ENCODE measurements at regions of chr19 and their contacts with region 1.

Region 1: GRCh38 chr19:32405431-32406161 is at the start of gene DPY19L3:
- DNase-seq: peak; percentile 95
- ATAC-seq: peak; percentile 97
- H3K4me3 Mint-ChIP-seq: peak within 1 kb of the TSS; percentile 84
- H3K27ac Mint-ChIP-seq: peak within 1 kb of the TSS; percentile 91
- H3K4me1 Mint-ChIP-seq: peaks cover 20% of the 10 kb centered on the region
- H3K27me3 Mint-ChIP-seq: no peaks in the 10 kb centered on the region
- total RNA-seq, gene DPY19L3: 14.3 to 14.6 TPM

Region 2: DNA sequence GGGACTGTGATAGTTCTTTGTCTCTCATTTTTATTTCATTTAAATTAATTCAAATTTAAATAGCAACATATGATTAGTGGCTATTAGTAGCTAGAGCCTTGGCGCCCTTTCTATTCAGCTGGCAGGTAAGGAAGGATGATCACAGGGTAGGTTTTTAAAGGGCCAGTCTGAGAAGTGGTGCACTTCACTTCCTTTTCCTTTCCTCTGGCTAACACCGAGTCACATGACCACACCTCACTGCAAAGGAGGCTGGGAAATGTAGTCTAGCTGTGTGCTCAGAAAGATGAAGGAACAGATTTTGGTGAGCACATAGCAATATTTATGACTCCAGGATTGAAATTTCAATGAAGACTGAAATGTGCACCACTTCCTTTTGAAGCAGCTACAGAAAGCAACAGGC is 1185.1 kb before region 1 on chr19:
- CTCF ChIA-PET with region 1: no interaction called
- POLR2A ChIA-PET with region 1: no interaction called
- intact Hi-C with region 1: loop called (anchors 5 to 10 kb)
- DNase-seq: peak; percentile 51
- ATAC-seq: peak; percentile 96
- H3K4me3 Mint-ChIP-seq: no peak overlapping the region
- H3K27ac Mint-ChIP-seq: peak overlapping the region; percentile 45
- H3K4me1 Mint-ChIP-seq: peaks cover 14% of the 10 kb centered on the region
- H3K27me3 Mint-ChIP-seq: no peaks in the 10 kb centered on the region

Region 3: GRCh38 chr19:32580901-32581703 is 175.5 kb after region 1 on chr19 and contains the start of gene PDCD5:
- CTCF ChIA-PET with region 1: no interaction called
- POLR2A ChIA-PET with region 1: no interaction called
- intact Hi-C with region 1: loop called (anchors 1 to 2 kb)
- DNase-seq: peak; percentile 99
- ATAC-seq: peak; percentile 90
- H3K4me3 Mint-ChIP-seq: peak within 1 kb of the TSS; percentile 92
- H3K27ac Mint-ChIP-seq: peak within 1 kb of the TSS; percentile 91
- H3K4me1 Mint-ChIP-seq: peaks cover 33% of the 10 kb centered on the region
- H3K27me3 Mint-ChIP-seq: peaks cover under 1% of the 10 kb centered on the region
- total RNA-seq, gene PDCD5: 268 to 272 TPM

Region 4: GRCh38 chr19:32708457-32708856 is 302.9 kb after region 1 on chr19:
- CTCF ChIA-PET with region 1: no interaction called
- POLR2A ChIA-PET with region 1: interaction called, 11 read pairs
- intact Hi-C with region 1: no loop called
- DNase-seq: peak; percentile 73
- ATAC-seq: peak; percentile 97
- H3K4me3 Mint-ChIP-seq: no peak overlapping the region
- H3K27ac Mint-ChIP-seq: peak overlapping the region; percentile 74
- H3K4me1 Mint-ChIP-seq: peaks cover 19% of the 10 kb centered on the region
- H3K27me3 Mint-ChIP-seq: no peaks in the 10 kb centered on the region

Region 5: GRCh38 chr19:32819419-32820400 is 414.1 kb after region 1 on chr19:
- CTCF ChIA-PET with region 1: no interaction called
- POLR2A ChIA-PET with region 1: no interaction called
- intact Hi-C with region 1: no loop called
- DNase-seq: no peak
- ATAC-seq: no peak
- H3K4me3 Mint-ChIP-seq: no peak overlapping the region
- H3K27ac Mint-ChIP-seq: no peak overlapping the region
- H3K4me1 Mint-ChIP-seq: peaks cover 12% of the 10 kb centered on the region
- H3K27me3 Mint-ChIP-seq: peaks cover 11% of the 10 kb centered on the region

Region 6: GRCh38 chr19:33521480-33522370 is 1116.1 kb after region 1 on chr19 and contains the start of gene PEPD:
- CTCF ChIA-PET with region 1: no interaction called
- POLR2A ChIA-PET with region 1: no interaction called
- intact Hi-C with region 1: loop called in 1 of 2 experiments (anchors 5 kb)
- DNase-seq: peak; percentile 95
- ATAC-seq: peak; percentile 97
- H3K4me3 Mint-ChIP-seq: peak within 1 kb of the TSS; percentile 89
- H3K27ac Mint-ChIP-seq: peak within 1 kb of the TSS; percentile 60
- H3K4me1 Mint-ChIP-seq: peaks cover 20% of the 10 kb centered on the region
- H3K27me3 Mint-ChIP-seq: no peaks in the 10 kb centered on the region
- total RNA-seq, gene PEPD: 26.9 to 37.4 TPM

Measured in activated CD4-positive, alpha-beta T cell treated with anti-CD3 and anti-CD28 coated beads for 36 hours (primary cell).